ENCODE measurements at regions of chr7 and their contacts with region 1.

Region 1: DNA sequence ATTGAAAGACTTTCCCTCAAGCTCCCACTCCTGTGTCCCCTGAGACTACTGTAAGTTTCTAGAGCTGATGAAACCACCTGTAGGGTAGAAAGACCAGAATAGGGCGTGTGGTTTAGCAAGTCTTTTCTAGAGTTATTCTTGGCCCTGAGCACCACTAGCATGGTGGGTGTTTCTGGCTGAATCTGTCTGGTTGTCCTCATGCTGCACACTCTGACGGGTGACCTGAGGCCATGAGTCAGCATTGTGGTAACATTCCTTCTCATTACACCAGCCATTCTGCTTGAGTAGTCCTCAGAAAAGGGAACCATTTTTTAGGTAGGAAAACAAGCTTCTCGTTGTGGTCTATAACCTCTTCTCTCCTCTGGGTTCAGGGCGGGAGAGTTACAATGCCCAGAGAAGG is 250.3 kb downstream of the SNX13 start:
- DNase-seq: peak in 2 of 14 experiments; percentile 15 to 40
- ATAC-seq: no peak
- H3K4me3 ChIP-seq: no peak overlapping the region
- H3K4me3 Mint-ChIP-seq: no peak overlapping the region
- H3K27ac ChIP-seq: no peak overlapping the region
- H3K27ac Mint-ChIP-seq: no peak overlapping the region
- H3K4me1 ChIP-seq: no peaks in the 10 kb centered on the region
- H3K4me1 Mint-ChIP-seq: no peaks in the 10 kb centered on the region
- H3K27me3 ChIP-seq: no peaks in the 10 kb centered on the region
- H3K27me3 Mint-ChIP-seq: no peaks in the 10 kb centered on the region
- CTCF ChIP-seq: no peak

Region 2: DNA sequence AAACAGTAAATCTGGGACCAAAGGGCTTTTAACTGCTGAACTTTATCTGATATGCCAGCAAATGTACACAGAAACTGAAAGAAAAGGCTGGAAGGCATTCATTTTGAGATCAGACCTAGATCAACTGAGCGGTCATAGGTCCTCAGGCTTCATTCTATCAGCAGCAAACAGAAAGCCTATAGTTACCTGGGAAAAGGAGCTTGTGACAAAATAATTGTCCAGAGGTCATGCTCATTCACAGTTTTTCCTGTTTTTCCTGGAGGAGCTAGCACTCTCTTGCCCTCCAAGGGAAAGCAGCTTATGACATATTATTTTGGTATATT is 71.4 kb before region 1 on chr7:
- CTCF ChIA-PET with region 1: no interaction called
- POLR2A ChIA-PET with region 1: no interaction called
- intact Hi-C with region 1: no loop called
- DNase-seq: no peak
- ATAC-seq: no peak
- H3K4me3 ChIP-seq: no peak overlapping the region
- H3K4me3 Mint-ChIP-seq: no peak overlapping the region
- H3K27ac ChIP-seq: no peak overlapping the region
- H3K27ac Mint-ChIP-seq: no peak overlapping the region
- H3K4me1 ChIP-seq: no peaks in the 10 kb centered on the region
- H3K4me1 Mint-ChIP-seq: no peaks in the 10 kb centered on the region
- H3K27me3 ChIP-seq: no peaks in the 10 kb centered on the region
- H3K27me3 Mint-ChIP-seq: no peaks in the 10 kb centered on the region
- CTCF ChIP-seq: no peak

Region 3: DNA sequence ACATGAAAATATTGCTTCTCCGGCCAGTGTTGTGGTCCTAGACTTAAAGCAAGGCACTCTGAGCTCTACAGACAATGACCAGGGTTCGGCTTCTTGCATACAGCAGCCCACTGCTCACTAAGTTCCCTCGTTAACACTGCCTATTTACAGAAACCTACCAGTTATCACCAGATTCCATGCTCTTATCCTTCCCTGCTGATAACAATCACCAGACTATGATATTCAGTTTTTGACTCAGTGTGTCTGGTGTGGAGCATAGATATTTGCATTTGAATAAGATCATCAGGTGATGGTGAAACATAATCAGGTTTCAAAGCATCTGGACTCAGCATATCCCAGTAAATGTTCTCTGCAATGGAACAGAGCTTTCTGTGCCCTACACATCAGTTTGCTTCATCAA is 68.0 kb after region 1 on chr7:
- CTCF ChIA-PET with region 1: no interaction called
- POLR2A ChIA-PET with region 1: no interaction called
- intact Hi-C with region 1: loop called in 1 of 2 experiments (anchors 10 kb)
- DNase-seq: no peak
- ATAC-seq: no peak
- H3K4me3 ChIP-seq: no peak overlapping the region
- H3K4me3 Mint-ChIP-seq: no peak overlapping the region
- H3K27ac ChIP-seq: no peak overlapping the region
- H3K27ac Mint-ChIP-seq: no peak overlapping the region
- H3K4me1 ChIP-seq: no peaks in the 10 kb centered on the region
- H3K4me1 Mint-ChIP-seq: no peaks in the 10 kb centered on the region
- H3K27me3 ChIP-seq: no peaks in the 10 kb centered on the region
- H3K27me3 Mint-ChIP-seq: no peaks in the 10 kb centered on the region
- CTCF ChIP-seq: no peak

Measured in CD4-positive, alpha-beta T cell (primary cell).